CD4-positive, alpha-beta T cell (primary cell): ENCODE measurements at regions of chr2 and their contacts with region 1.

Region 1: GRCh38 chr2:73926493-73927338 is at the start of gene DGUOK:
- DNase-seq: peak; percentile 90 to 100 (median 94)
- ATAC-seq: peak; percentile 97
- H3K4me3 ChIP-seq: peak within 1 kb of the TSS; percentile 78
- H3K4me3 Mint-ChIP-seq: peak within 1 kb of the TSS; percentile 83
- H3K27ac ChIP-seq: peak within 1 kb of the TSS; percentile 97
- H3K27ac Mint-ChIP-seq: peak within 1 kb of the TSS; percentile 98
- H3K4me1 ChIP-seq: peaks cover 46% of the 10 kb centered on the region
- H3K4me1 Mint-ChIP-seq: peaks cover 53% of the 10 kb centered on the region
- H3K27me3 ChIP-seq: no peaks in the 10 kb centered on the region
- H3K27me3 Mint-ChIP-seq: no peaks in the 10 kb centered on the region
- CTCF ChIP-seq: no peak
- total RNA-seq, gene DGUOK: 30.5 to 32.0 TPM

Region 2: DNA sequence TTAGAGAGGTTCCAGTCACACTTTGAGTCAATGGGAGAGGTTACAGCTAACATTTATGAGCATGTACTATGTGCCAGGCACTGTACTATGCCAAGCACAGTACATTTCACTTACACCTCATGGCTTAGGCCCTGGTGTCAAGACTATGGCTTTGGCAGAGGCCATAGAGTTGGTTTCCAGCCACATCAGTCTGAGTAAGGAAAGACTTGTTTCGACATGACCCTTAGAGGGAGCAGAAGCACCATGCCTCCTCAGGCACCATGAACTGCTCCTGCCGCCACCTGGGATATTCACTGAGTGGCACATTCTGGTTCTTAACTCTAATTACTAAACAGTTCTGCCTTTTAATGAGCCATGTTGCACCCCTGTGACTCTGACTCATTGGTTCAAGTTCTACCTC is 12.7 kb after region 1 on chr2:
- CTCF ChIA-PET with region 1: no interaction called
- POLR2A ChIA-PET with region 1: interaction called, 22 read pairs
- intact Hi-C with region 1: loop called in 1 of 2 experiments (anchors 1 kb)
- DNase-seq: peak in 9 of 14 experiments; percentile 3 to 64 (median 38)
- ATAC-seq: peak; percentile 81
- H3K4me3 ChIP-seq: no peak overlapping the region
- H3K4me3 Mint-ChIP-seq: peak overlapping the region; percentile 11
- H3K27ac ChIP-seq: no peak overlapping the region
- H3K27ac Mint-ChIP-seq: peak overlapping the region; percentile 77
- H3K4me1 ChIP-seq: peaks cover 19% of the 10 kb centered on the region
- H3K4me1 Mint-ChIP-seq: peaks cover 77% of the 10 kb centered on the region
- H3K27me3 ChIP-seq: no peaks in the 10 kb centered on the region
- H3K27me3 Mint-ChIP-seq: no peaks in the 10 kb centered on the region
- CTCF ChIP-seq: peak; percentile 21

Region 3: GRCh38 chr2:73970850-73971471 is 44.2 kb after region 1 on chr2:
- CTCF ChIA-PET with region 1: interaction called, 3 read pairs
- POLR2A ChIA-PET with region 1: interaction called, 10 read pairs
- intact Hi-C with region 1: no loop called
- DNase-seq: peak; percentile 23 to 89 (median 53)
- ATAC-seq: peak; percentile 84
- H3K4me3 ChIP-seq: peak overlapping the region; percentile 31
- H3K4me3 Mint-ChIP-seq: peak overlapping the region; percentile 70
- H3K27ac ChIP-seq: peak overlapping the region; percentile 60 to 65
- H3K27ac Mint-ChIP-seq: peak overlapping the region; percentile 96
- H3K4me1 ChIP-seq: peaks cover 45% of the 10 kb centered on the region
- H3K4me1 Mint-ChIP-seq: peaks cover 78% of the 10 kb centered on the region
- H3K27me3 ChIP-seq: no peaks in the 10 kb centered on the region
- H3K27me3 Mint-ChIP-seq: no peaks in the 10 kb centered on the region
- CTCF ChIP-seq: no peak

Region 4: DNA sequence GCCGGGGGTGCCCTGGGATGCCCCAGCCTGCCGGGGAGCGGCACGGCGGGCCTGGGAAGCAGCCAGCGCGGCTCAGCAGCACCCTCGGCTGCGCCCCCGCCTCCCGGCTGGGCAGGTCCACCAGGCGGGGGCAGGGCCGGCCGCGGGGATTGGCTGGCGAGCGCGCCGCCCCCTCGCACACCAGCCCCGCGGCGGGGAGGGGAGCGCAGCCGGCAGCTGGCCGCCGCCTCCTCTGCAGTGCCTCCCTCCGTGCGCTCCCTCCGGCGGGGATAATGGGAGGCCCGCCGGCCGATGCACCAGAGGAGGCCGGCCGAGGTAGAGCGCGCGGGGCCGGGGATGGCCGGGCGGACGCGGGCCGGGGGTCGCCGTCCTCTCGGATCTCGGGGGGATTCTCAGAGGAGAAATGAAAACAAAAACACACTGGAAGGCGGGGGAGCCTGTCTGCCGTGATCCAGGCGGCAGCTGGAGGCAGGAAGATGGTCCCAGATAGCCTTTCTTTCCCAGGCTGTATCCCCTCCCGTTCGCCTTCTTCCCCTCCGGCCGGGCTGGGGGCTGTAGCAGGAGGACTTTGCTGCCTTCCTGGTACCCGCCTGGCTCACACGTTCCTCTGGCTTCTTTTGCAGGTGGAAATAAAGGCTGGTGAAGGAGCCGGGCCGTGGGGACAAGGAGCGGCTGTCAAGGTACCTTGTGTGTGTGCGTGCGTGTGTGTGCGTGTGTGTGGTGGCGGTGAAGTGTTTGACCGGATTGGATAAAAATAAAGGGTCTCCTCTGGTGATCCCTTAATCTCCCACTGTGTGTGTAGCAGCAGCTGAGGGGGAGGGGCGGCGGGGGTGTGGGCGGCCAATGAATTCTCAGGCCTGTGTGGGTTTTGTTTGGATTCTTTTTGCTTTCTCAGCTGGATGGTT is 76.0 kb after region 1 on chr2:
- CTCF ChIA-PET with region 1: interaction called, 4 read pairs
- POLR2A ChIA-PET with region 1: interaction called, 7 read pairs
- intact Hi-C with region 1: loop called in 1 of 2 experiments (anchors 1 kb)
- DNase-seq: peak; percentile 53 to 92 (median 77)
- ATAC-seq: peak; percentile 85
- H3K4me3 ChIP-seq: peak overlapping the region; percentile 58
- H3K4me3 Mint-ChIP-seq: peak overlapping the region; percentile 90
- H3K27ac ChIP-seq: no peak overlapping the region
- H3K27ac Mint-ChIP-seq: peak overlapping the region; percentile 68
- H3K4me1 ChIP-seq: peaks cover 67% of the 10 kb centered on the region
- H3K4me1 Mint-ChIP-seq: peaks cover 77% of the 10 kb centered on the region
- H3K27me3 ChIP-seq: no peaks in the 10 kb centered on the region
- H3K27me3 Mint-ChIP-seq: no peaks in the 10 kb centered on the region
- CTCF ChIP-seq: no peak

Region 5: DNA sequence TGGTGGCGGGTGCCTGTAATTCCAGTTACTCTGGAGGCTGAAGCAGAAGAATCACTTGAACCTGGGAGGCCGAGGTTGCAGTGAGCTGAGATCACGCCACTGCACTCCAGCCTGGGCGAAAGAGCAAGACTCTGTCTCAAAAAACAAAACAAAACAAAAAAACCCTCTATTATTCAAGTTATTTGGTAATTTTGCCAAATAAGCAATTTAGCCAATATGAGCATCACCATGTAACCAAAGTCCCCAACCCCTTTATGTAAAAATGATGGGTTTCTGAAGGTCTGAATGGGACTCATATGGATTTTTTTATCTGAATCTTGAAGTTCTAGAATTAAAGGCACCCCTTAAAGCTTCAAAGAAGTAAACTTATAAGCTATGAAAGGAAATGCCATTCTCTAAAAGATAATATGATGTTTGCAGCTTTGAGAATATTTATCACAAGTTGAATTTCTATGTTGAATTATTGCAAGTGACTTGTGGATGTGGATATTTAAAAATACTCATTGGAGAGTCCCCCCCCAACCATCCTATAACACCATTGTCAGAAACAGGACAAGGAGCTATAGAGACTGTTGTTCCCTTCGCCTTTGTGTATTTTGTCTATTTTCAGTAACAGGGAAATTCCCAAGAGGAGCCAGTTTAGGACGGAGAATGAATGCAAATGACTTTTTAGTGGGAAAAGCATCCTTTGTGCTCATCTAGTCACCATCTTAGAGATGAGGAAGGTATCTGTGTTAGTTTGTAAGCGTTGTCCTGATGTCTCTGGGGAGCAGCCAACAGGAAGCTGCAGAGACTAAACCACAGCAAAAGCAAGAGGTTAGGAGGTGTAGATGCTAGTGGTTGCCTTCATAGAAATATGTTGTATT is 126.2 kb after region 1 on chr2:
- CTCF ChIA-PET with region 1: no interaction called
- POLR2A ChIA-PET with region 1: interaction called, 7 read pairs
- intact Hi-C with region 1: loop called in 1 of 2 experiments (anchors 5 kb)
- DNase-seq: peak in 7 of 14 experiments; percentile 10 to 61 (median 47)
- ATAC-seq: peak; percentile 99
- H3K4me3 ChIP-seq: no peak overlapping the region
- H3K4me3 Mint-ChIP-seq: peak overlapping the region; percentile 78
- H3K27ac ChIP-seq: peak overlapping the region; percentile 9 to 38
- H3K27ac Mint-ChIP-seq: peak overlapping the region; percentile 83
- H3K4me1 ChIP-seq: peaks cover 21% of the 10 kb centered on the region
- H3K4me1 Mint-ChIP-seq: peaks cover 67% of the 10 kb centered on the region
- H3K27me3 ChIP-seq: no peaks in the 10 kb centered on the region
- H3K27me3 Mint-ChIP-seq: no peaks in the 10 kb centered on the region
- CTCF ChIP-seq: no peak

Region 6: GRCh38 chr2:74119912-74120825 is 193.5 kb after region 1 on chr2:
- CTCF ChIA-PET with region 1: no interaction called
- POLR2A ChIA-PET with region 1: interaction called, 8 read pairs
- intact Hi-C with region 1: loop called in 1 of 2 experiments (anchors 5 kb)
- DNase-seq: peak; percentile 66 to 92 (median 82)
- ATAC-seq: peak; percentile 95
- H3K4me3 ChIP-seq: peak overlapping the region; percentile 86
- H3K4me3 Mint-ChIP-seq: peak overlapping the region; percentile 90
- H3K27ac ChIP-seq: peak overlapping the region; percentile 81 to 94
- H3K27ac Mint-ChIP-seq: peak overlapping the region; percentile 88
- H3K4me1 ChIP-seq: peaks cover 10% of the 10 kb centered on the region
- H3K4me1 Mint-ChIP-seq: peaks cover 11% of the 10 kb centered on the region
- H3K27me3 ChIP-seq: no peaks in the 10 kb centered on the region
- H3K27me3 Mint-ChIP-seq: no peaks in the 10 kb centered on the region
- CTCF ChIP-seq: peak; percentile 63

Region 7: DNA sequence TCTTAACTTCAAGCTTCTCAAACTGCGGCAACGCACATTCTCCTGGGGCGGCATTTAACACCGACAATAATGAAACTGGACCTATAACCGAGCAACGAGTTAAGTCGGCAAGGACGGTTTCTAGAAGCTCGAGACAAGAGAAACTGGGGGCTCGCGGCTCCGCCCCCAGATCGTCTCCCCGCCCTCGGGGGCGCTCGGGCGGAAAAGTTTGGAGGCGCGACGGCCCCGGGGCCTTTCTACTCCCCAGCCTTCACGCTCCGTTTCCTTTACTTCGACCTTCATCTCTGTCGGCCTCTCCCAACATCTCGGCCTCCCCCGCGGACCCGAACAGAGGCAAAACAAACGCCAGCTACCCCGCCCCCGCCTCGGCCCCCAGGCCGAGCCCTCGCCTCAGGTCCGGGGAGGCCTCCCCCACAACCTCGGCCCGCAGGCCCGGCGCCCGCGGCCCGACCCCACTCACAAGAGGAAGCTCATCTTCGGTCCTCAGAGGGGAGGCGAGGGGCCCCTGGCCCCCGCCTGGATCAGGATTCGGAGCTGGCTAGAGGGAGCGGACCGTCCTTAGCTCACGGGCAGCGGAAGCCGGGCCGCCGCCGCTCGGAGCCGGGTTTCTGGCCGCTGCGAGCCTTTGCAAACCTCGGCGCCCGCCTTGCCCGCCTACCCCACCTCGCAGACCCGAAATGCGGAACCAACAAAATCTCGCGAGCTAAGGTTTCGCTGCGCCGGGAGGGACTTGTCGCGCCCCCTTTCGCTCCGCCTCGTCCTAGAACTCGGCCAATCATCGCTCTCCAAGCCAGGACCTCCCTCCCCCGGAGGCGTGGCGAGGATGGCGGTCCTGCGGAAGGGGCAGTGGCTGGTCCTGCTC is 251.7 kb after region 1 on chr2 and contains the start of gene MOB1A:
- CTCF ChIA-PET with region 1: no interaction called
- POLR2A ChIA-PET with region 1: interaction called, 14 read pairs
- intact Hi-C with region 1: loop called in 1 of 2 experiments (anchors 1 kb)
- DNase-seq: peak; percentile 93 to 99 (median 97)
- ATAC-seq: peak; percentile 95
- H3K4me3 ChIP-seq: peak within 1 kb of the TSS; percentile 62
- H3K4me3 Mint-ChIP-seq: peak within 1 kb of the TSS; percentile 95
- H3K27ac ChIP-seq: peak within 1 kb of the TSS; percentile 89 to 96
- H3K27ac Mint-ChIP-seq: peak within 1 kb of the TSS; percentile 91
- H3K4me1 ChIP-seq: peaks cover 35% of the 10 kb centered on the region
- H3K4me1 Mint-ChIP-seq: peaks cover 39% of the 10 kb centered on the region
- H3K27me3 ChIP-seq: no peaks in the 10 kb centered on the region
- H3K27me3 Mint-ChIP-seq: no peaks in the 10 kb centered on the region
- CTCF ChIP-seq: no peak
- total RNA-seq, gene MOB1A: 150 to 159 TPM